ENCODE measurements at regions of chr2 and their contacts with region 1.

Region 1: GRCh38 chr2:157194097-157194688 is 63.3 kb upstream of the GALNT5 start:
- DNase-seq: peak; percentile 33 to 50 (median 46)
- H3K4me3 ChIP-seq: no peak overlapping the region
- H3K4me3 Mint-ChIP-seq: no peak overlapping the region
- H3K27ac ChIP-seq: no peak overlapping the region
- H3K27ac Mint-ChIP-seq: no peak overlapping the region
- H3K4me1 ChIP-seq: no peaks in the 10 kb centered on the region
- H3K4me1 Mint-ChIP-seq: peaks cover 12% of the 10 kb centered on the region
- H3K27me3 ChIP-seq: no peaks in the 10 kb centered on the region
- H3K27me3 Mint-ChIP-seq: peaks cover 1 to 3% (median 2%) of the 10 kb centered on the region in 3 donors
- CTCF ChIP-seq: peak; percentile 80

Region 2: DNA sequence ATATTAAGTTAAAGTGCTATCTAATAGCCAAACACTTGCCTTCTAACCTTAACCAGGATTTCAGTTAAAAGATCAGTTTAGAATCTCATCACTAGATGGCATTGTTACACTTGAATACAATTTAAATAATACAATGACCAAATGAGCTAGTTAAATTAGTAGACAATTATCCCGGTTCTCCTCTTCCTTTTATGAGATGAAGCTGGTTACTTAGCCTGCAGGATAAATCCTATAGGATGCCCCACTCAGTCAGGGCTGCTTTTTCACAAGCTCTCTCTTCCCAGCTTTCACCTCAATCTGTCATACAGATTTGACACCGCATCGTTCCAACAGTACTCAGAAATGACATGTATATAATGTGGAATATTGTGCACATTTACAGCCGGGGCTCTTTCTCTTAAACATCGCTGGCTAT is 1816.9 kb before region 1 on chr2:
- intact Hi-C with region 1: loop called in 1 of 2 experiments (anchors 10 kb)
- DNase-seq: peak in 1 of 3 donors; percentile 3
- H3K4me3 ChIP-seq: no peak overlapping the region
- H3K4me3 Mint-ChIP-seq: no peak overlapping the region
- H3K27ac ChIP-seq: no peak overlapping the region
- H3K27ac Mint-ChIP-seq: no peak overlapping the region
- H3K4me1 ChIP-seq: no peaks in the 10 kb centered on the region
- H3K4me1 Mint-ChIP-seq: no peaks in the 10 kb centered on the region
- H3K27me3 ChIP-seq: no peaks in the 10 kb centered on the region
- H3K27me3 Mint-ChIP-seq: peaks cover 0 to 1% (median 0%) of the 10 kb centered on the region in 3 donors
- CTCF ChIP-seq: peak; percentile 32

Region 3: DNA sequence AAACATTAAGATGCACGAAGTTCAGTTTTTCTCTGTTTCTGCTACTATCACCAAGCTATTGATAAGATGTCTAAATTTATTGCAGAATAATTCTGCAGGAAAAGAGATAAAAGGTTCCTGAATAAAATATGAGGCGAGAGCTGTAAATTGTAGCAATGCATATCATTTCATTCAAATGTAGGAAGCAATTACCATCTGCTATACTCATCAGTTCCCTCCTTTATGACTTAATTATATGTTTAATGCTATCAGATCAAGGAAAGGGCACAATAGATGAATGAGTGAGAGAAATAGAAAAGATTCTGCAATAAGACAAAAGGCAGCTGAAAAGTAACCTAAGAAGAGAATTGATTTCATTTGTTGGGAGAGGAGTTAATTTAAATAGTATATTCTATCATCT is 44.9 kb before region 1 on chr2:
- intact Hi-C with region 1: no loop called
- DNase-seq: no peak
- H3K4me3 ChIP-seq: no peak overlapping the region
- H3K4me3 Mint-ChIP-seq: no peak overlapping the region
- H3K27ac ChIP-seq: no peak overlapping the region
- H3K27ac Mint-ChIP-seq: no peak overlapping the region
- H3K4me1 ChIP-seq: no peaks in the 10 kb centered on the region
- H3K4me1 Mint-ChIP-seq: no peaks in the 10 kb centered on the region
- H3K27me3 ChIP-seq: no peaks in the 10 kb centered on the region
- H3K27me3 Mint-ChIP-seq: peaks cover 1 to 2% (median 2%) of the 10 kb centered on the region in 3 donors
- CTCF ChIP-seq: no peak

Measured in CD14-positive monocyte (primary cell).